Activated B cell treated with CpG ODN at 0.5 μM for 24 hours (primary cell): ENCODE measurements at regions of chr2 and their contacts with region 1.

Region 1: DNA sequence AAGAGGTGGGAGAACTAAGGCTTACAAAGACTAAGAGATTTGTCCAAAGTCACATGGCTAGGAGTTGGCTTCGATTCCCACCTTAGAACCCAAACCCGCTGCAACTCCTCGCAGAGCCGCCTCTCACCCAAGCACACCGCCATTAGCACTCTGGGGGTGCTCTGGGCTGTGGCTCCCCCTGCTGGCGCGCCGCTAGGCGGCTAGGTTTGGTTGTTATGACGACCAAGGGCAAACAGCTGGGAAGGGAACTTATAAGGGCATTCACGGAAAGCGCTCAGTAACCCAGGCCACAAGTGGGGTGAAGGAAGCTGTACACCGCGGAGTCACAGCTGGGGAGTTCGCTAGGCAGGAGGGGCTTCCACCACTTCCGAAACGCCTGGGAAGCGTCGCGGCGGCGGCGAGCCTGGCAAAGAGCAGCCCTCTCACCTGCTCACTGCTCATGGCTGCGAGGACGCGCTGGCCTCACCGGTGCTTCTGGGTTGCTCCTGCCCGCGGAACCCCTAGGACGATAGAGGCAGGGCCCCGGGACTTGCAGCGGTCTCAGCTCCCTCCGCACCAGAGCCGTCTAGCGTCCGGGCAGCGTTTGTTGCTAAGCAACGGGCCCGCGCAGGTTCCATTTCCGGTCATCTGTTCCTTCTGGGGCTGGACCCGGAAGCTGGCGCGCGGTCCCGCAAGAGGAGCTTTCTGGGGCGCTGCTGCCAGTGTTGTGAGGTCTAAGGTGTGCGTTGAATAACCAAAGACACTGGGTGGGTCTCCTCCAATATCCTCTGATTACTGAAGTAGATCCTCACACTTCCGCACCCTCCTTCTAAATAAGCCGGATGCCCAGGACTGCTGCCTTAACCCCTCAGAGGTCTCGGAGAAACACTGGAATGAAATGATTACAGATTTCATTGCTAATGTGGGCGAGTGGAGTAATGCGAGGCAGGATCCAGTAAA is at the start of gene DNAH7:
- DNase-seq: peak; percentile 83
- ATAC-seq: peak; percentile 94
- H3K4me3 Mint-ChIP-seq: peak within 1 kb of the TSS; percentile 93
- H3K27ac Mint-ChIP-seq: peak within 1 kb of the TSS; percentile 91
- H3K4me1 Mint-ChIP-seq: peaks cover 12% of the 10 kb centered on the region
- H3K27me3 Mint-ChIP-seq: peaks cover under 1% of the 10 kb centered on the region
- CTCF ChIP-seq: peak; percentile 47
- total RNA-seq, gene DNAH7: 0.17 and 0.29 TPM in 2 replicates

Region 2: DNA sequence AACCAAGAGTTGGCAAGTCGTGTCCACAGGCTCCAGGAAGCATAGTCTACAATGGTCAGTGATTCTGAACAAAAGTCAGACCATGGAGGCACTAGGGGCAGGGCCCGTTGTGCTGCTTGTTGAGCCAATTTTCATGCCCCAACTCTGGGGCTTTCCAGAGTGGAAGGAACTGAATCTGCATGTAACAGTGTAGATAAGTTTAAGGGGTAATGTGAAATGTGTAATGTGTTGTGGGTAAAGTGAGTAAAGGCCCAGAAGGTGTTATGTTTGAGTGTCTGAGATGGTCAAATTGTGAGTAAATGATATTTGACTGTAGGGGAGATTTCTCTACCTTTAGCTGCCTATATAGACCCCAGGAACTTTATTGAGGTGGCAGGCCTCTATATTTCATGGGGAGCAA is 1748.0 kb before region 1 on chr2:
- CTCF ChIA-PET with region 1: no interaction called
- POLR2A ChIA-PET with region 1: no interaction called
- intact Hi-C with region 1: loop called (anchors 5 kb)
- DNase-seq: no peak
- ATAC-seq: no peak
- H3K4me3 Mint-ChIP-seq: no peak overlapping the region
- H3K27ac Mint-ChIP-seq: no peak overlapping the region
- H3K4me1 Mint-ChIP-seq: no peaks in the 10 kb centered on the region
- H3K27me3 Mint-ChIP-seq: no peaks in the 10 kb centered on the region
- CTCF ChIP-seq: no peak

Region 3: DNA sequence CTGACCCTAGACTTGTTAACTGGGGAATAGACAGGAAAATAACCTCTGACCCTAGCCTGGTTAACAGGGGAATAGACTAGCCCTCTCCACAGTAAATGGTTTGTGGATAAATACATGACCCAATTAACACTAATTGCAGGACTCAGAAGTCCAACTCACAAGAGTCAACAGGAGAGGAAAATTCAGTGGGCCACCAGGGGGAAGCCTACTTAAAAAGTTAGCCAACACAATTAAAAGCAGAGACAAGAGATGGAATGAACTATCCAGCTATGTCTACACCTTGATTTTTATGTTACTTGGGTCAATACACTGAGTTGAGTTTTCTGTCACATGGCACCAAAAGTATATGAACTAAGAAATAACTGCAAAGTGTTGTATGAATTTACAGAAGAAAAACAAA is 570.4 kb before region 1 on chr2:
- CTCF ChIA-PET with region 1: interaction called, 17 read pairs
- POLR2A ChIA-PET with region 1: no interaction called
- intact Hi-C with region 1: loop called (anchors 1 kb)
- DNase-seq: peak; percentile 22
- ATAC-seq: peak; percentile 66
- H3K4me3 Mint-ChIP-seq: no peak overlapping the region
- H3K27ac Mint-ChIP-seq: no peak overlapping the region
- H3K4me1 Mint-ChIP-seq: peaks cover 18% of the 10 kb centered on the region
- H3K27me3 Mint-ChIP-seq: no peaks in the 10 kb centered on the region
- CTCF ChIP-seq: no peak

Region 4: DNA sequence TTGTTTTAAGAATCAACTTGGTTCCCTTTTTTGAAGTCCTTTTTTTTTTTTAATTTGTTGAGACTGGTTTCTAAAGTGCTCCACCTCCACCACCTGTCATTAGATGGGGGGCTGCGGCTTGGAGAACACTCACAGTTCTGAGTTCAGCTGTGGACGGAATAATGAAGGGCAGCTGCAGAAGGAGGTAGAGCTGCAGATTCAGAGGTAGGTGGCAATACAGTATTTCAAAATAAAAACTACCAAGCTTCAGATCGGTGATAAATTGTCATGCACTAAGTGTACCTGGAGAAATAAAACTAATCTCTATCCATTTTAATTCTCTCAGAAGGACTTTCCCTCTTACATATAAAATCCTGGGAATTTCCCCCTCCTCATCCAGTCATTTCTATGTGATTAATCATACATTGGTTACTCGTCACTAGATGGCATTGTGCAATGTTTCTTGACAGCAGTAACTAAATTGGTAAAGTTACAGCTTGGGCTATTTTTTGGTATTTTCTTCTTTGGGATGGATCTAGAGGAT is 492.6 kb before region 1 on chr2:
- CTCF ChIA-PET with region 1: interaction called, 19 read pairs
- POLR2A ChIA-PET with region 1: interaction called, 4 read pairs
- intact Hi-C with region 1: loop called (anchors 1 kb)
- DNase-seq: no peak
- ATAC-seq: peak; percentile 79
- H3K4me3 Mint-ChIP-seq: peak overlapping the region; percentile 70
- H3K27ac Mint-ChIP-seq: peak overlapping the region; percentile 76
- H3K4me1 Mint-ChIP-seq: peaks cover 50% of the 10 kb centered on the region
- H3K27me3 Mint-ChIP-seq: no peaks in the 10 kb centered on the region
- CTCF ChIP-seq: no peak

Region 5: DNA sequence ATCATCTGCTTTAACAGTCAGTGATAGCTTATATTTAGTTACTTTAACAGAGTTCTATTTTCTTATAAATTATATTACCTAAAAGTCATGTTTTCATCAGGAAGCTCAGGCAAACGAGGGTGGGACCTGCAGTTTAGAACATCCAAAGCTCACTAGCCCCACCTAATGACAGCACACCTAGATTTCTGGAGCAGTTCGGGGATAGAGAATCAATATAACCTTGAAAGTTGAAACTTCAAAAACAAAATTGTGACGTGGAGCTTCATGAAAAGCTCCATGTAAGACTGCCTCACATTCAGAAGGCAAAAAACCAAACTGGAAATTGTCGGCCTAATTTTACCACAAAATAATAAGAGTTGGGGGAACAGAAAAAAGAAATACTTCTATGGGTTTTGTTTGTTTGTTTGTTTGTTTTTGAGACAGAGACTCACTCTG is 385.1 kb after region 1 on chr2:
- CTCF ChIA-PET with region 1: interaction called, 13 read pairs
- POLR2A ChIA-PET with region 1: no interaction called
- intact Hi-C with region 1: no loop called
- DNase-seq: no peak
- ATAC-seq: peak; percentile 65
- H3K4me3 Mint-ChIP-seq: no peak overlapping the region
- H3K27ac Mint-ChIP-seq: no peak overlapping the region
- H3K4me1 Mint-ChIP-seq: no peaks in the 10 kb centered on the region
- H3K27me3 Mint-ChIP-seq: peaks cover 9% of the 10 kb centered on the region
- CTCF ChIP-seq: no peak